Sigmoid colon (tissue), 7 donors: ENCODE measurements at regions of chr17 and their contacts with region 1.

Region 1: DNA sequence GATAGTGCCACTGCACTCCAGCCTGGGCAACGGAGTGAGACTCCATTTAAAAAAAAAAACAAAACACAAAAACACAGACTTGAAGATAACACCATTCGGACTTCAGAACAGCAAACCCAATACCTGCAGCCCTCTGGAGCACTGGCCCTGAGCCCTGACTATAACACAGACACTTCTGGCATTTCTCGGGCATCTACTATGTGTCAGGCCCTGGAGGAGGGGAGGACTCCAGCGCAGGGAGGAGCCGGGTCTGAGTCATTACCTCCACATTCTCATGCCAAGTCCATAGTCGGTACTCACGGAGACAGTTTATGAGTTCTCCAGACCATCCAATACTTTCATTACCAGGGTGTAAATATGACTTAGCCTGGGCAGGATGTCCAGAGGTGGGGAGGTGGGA is 48.8 kb downstream of the PITPNM3 start:
- DNase-seq: peak; percentile 88
- H3K4me3 ChIP-seq: no peak overlapping the region
- H3K27ac ChIP-seq: peak overlapping the region; percentile 68 to 82 (median 76)
- H3K4me1 ChIP-seq: peaks cover 0 to 44% (median 33%) of the 10 kb centered on the region in 4 donors
- H3K27me3 ChIP-seq: no peaks in the 10 kb centered on the region
- CTCF ChIP-seq: no peak
- EP300 ChIP-seq: peak in 1 of 4 donors; percentile 67
- POLR2A ChIP-seq: no peak

Region 2: DNA sequence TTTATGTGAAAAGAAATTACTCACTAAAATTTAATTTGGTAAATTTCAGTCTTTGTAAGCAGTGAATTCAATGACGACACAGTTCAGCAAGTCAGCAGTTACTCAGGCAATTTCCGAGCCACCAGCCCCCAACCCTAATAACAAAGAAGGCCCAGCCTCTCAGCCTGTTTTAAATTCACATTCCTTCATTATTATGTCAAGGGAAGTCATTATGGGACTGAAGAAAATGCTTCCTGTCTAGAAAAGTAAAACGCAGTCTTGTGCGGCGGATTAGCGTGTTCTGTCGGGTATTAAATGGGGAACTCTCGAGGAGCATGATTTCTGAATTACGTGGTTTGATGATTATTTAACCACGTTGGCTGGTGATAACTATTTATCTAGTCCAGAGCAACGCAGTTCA is 250.2 kb before region 1 on chr17:
- intact Hi-C with region 1: no loop called
- DNase-seq: no peak
- H3K4me3 ChIP-seq: no peak overlapping the region
- H3K27ac ChIP-seq: no peak overlapping the region
- H3K4me1 ChIP-seq: no peaks in the 10 kb centered on the region
- H3K27me3 ChIP-seq: peaks cover 0 to 3% (median 0%) of the 10 kb centered on the region in 3 donors
- CTCF ChIP-seq: no peak
- EP300 ChIP-seq: no peak
- POLR2A ChIP-seq: no peak

Region 3: GRCh38 chr17:6555331-6556120 is 48.0 kb after region 1 on chr17:
- intact Hi-C with region 1: loop called (anchors 2 kb)
- DNase-seq: no peak
- H3K4me3 ChIP-seq: peak overlapping the region; percentile 62 to 92 (median 70)
- H3K27ac ChIP-seq: peak overlapping the region; percentile 81 to 86 (median 83)
- H3K4me1 ChIP-seq: peaks cover 0 to 49% (median 31%) of the 10 kb centered on the region in 4 donors
- H3K27me3 ChIP-seq: peaks cover 0 to 14% (median 0%) of the 10 kb centered on the region in 3 donors
- CTCF ChIP-seq: no peak
- EP300 ChIP-seq: no peak
- POLR2A ChIP-seq: no peak